Activated B cell treated with CpG ODN at 0.5 μM for 24 hours (primary cell): ENCODE measurements at regions of chr9 and their contacts with region 1.

Region 1: DNA sequence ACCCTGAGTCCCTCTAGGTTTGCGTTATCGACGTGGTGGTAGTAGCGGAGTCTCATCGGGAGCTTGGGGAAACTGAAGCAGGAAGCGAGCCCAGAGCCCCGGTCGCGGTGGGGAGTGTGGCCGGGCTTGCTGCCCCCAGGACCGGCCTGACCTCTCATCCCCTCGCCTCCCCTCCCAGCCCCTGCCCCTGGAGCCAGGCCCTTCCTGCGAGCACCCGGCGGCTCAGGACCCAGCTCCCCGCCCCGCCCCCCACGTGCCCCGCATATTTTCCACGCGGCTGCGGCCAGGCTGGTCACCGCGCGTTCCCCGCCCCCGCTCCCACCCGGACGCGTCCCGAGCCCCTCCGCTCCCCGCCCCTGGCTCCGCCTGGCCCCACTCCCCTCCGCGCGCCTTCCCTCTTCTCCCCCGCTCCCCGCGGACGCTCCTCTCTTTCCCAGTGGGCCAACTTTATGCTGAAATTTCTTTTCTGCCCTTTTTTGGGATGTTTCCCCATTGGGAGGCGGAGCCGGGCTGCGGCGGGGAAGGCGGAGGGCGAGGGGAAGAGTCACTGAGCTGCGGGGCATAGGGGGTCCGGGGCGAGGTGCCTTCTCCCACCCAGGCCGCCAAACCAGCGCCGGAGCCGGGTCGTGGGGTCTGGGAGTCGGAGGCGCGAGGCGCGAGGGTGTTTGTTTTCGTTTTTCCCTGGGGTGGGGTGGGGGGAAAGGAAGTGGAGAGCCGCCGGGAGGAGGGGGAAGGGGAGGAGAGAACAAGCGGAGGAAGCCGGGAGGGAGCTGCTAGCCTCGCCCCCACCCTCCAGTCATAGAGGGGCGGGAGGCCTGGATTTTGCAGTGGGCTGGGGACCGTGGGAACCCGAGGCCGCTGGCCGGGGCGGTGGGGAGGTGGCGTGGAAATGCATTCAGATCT is 957 bp upstream of the TPM2 start:
- DNase-seq: peak; percentile 27
- ATAC-seq: peak; percentile 42
- H3K4me3 Mint-ChIP-seq: peak overlapping the region; percentile 86
- H3K27ac Mint-ChIP-seq: peak overlapping the region; percentile 76
- H3K4me1 Mint-ChIP-seq: peaks cover 12% of the 10 kb centered on the region
- H3K27me3 Mint-ChIP-seq: no peaks in the 10 kb centered on the region
- CTCF ChIP-seq: no peak

Region 2: DNA sequence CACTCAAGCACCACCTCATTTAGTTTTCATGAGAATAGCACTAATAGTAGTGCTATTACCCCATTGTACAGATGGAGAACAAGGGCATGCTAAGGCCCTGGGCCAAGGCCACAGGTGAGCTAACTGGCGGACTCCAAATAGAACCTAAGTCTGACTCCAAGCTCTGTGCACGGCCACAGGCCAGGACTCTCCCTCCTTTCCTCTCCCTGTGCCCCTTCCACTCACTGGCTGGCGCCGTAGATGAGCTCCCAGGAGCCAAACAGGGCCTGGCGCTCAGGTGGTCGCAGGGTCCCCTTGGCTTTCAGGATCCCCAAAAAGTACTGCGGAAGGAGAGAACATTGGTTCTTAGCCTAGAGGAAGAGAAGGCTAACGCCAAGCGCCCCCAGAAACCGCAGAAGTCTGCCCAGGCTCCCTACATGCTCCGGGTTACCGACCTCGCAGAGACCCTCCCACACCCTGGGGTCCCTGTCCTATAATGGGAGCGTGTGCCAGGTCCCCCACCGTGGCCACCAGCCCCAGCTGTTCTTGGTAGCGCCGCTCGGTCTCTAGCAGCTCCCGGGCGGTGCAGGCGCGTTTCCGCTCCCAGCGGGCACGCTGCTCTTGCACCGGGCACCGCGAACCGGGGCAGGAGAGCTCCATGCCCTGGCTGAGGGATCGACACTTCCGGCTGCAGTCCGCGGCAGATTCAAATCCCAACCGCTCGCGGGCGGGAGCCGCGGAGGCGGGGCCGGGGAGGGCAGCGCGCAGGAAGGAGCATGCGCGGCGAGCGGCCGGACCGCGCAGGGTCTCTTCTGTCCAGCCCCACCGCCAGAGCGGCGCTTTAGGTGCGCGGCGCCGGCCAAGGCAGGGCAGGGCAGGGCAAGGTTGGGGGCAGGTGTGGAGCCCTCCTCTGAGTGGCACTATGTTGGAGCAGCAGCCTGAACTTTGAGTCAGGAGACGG is 25.9 kb before region 1 on chr9 and contains the start of gene ARHGEF39:
- CTCF ChIA-PET with region 1: interaction called, 32 read pairs
- POLR2A ChIA-PET with region 1: interaction called, 24 read pairs
- intact Hi-C with region 1: loop called (anchors 1 kb)
- DNase-seq: peak; percentile 60
- ATAC-seq: peak; percentile 71
- H3K4me3 Mint-ChIP-seq: peak within 1 kb of the TSS; percentile 83
- H3K27ac Mint-ChIP-seq: peak within 1 kb of the TSS; percentile 25
- H3K4me1 Mint-ChIP-seq: peaks cover 54% of the 10 kb centered on the region
- H3K27me3 Mint-ChIP-seq: no peaks in the 10 kb centered on the region
- CTCF ChIP-seq: no peak
- total RNA-seq, gene ARHGEF39: 0.59 and 0.89 TPM in 2 replicates

Region 3: DNA sequence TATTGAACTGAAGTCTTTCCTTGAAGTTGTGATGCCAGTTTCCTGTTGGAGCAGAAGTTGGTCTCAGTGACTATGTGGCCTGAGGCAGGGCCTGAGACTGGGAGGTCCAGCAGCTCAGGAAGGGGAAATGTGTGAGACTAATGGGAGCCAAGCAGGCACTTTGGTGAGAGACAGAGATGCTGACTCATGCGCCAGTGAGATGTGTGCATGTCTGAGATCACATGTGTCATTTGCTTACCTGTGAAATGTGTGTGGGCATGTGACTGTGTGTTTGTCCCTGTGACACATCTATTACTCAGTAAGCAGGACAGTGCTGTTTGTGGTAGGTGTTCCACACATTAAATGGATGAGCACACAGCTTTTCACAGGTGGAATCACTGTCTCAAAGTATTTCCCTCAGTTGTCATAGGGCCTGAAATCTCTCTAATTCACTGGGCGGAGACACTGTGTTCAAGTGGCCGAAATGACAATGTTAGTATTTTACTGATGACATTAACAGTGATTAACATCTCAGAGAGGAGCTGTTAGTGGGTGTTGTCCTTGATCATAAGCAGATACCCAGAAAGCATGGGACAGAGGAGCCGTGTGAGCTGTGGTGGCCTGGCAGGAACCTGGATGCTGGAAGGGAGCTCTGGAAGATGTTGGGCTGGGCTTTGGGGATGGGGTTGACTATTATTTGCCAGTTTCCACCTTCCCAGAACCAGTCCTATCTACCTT is 108.1 kb after region 1 on chr9:
- CTCF ChIA-PET with region 1: no interaction called
- POLR2A ChIA-PET with region 1: interaction called, 10 read pairs
- intact Hi-C with region 1: no loop called
- DNase-seq: no peak
- ATAC-seq: no peak
- H3K4me3 Mint-ChIP-seq: no peak overlapping the region
- H3K27ac Mint-ChIP-seq: no peak overlapping the region
- H3K4me1 Mint-ChIP-seq: no peaks in the 10 kb centered on the region
- H3K27me3 Mint-ChIP-seq: no peaks in the 10 kb centered on the region
- CTCF ChIP-seq: no peak

Region 4: DNA sequence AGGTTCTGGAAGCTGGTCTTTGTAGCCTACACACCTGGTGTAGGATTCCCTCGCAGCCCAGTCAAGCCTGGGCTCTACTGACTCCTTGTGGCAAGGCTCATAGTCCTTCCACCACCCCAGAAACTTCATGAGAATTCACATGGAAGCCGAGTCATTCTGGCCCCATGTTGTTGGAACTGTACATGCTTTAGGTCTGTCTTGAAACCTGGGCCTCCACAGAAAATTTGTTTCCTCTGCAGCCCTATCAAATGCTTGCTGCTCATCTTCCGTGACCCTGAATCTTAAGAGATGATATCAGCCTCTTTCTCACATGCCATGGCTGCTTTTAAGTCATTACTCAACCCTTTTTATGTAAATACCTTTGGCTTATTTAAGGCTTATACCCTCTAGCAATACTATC is 1618.5 kb after region 1 on chr9:
- CTCF ChIA-PET with region 1: no interaction called
- POLR2A ChIA-PET with region 1: no interaction called
- intact Hi-C with region 1: no loop called
- DNase-seq: no peak
- ATAC-seq: peak; percentile 87
- H3K4me3 Mint-ChIP-seq: no peak overlapping the region
- H3K27ac Mint-ChIP-seq: peak overlapping the region; percentile 84
- H3K4me1 Mint-ChIP-seq: peaks cover 43% of the 10 kb centered on the region
- H3K27me3 Mint-ChIP-seq: no peaks in the 10 kb centered on the region
- CTCF ChIP-seq: no peak